CD4-positive, alpha-beta memory T cell (primary cell): ENCODE measurements at regions of chr2 and their contacts with region 1.

Region 1: DNA sequence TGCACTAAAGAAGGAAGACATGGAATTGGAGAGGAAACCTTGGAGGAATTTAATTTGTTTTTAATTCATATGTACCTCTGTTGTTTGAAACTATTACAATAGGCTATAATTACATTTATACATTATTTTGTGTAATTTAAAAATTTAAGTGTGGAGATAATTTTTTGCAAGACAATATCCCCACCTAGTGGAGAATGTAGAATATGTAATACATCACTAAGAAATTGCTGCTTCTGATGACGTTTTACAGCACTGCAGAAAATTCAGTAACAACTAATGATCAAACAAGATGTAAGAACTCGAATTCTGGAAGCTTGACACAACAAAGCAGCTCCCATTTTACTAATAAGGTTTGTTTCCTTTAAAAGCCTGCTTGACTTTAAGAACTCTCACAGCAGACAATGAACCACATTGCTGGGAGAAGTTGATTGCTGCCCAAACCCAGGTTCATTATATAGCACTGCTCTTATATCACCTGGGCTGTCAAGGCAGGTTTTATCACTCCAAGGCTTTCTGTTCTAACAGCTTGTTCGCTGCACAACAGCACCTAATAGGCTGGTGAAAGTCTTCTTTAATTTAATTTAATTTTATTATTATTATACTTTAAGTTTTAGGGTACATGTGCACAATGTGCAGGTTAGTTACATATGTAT is 53.4 kb downstream of the THADA start:
- DNase-seq: peak; percentile 9 to 62 (median 54)
- H3K4me3 ChIP-seq: no peak overlapping the region
- H3K4me3 Mint-ChIP-seq: no peak overlapping the region
- H3K27ac ChIP-seq: no peak overlapping the region
- H3K27ac Mint-ChIP-seq: no peak overlapping the region
- H3K4me1 ChIP-seq: peaks cover 9% of the 10 kb centered on the region
- H3K4me1 Mint-ChIP-seq: peaks cover 5 to 10% (median 9%) of the 10 kb centered on the region in 4 donors
- H3K27me3 ChIP-seq: no peaks in the 10 kb centered on the region
- H3K27me3 Mint-ChIP-seq: no peaks in the 10 kb centered on the region

Region 2: GRCh38 chr2:42828487-42829425 is 713.7 kb before region 1 on chr2:
- CTCF ChIA-PET with region 1: interaction called, 6 read pairs
- POLR2A ChIA-PET with region 1: no interaction called
- intact Hi-C with region 1: loop called (anchors 1 kb)
- DNase-seq: peak; percentile 59 to 68 (median 63)
- H3K4me3 ChIP-seq: no peak overlapping the region
- H3K4me3 Mint-ChIP-seq: peak overlapping the region in 5 of 8 donors; percentile 17 to 57 (median 31)
- H3K27ac ChIP-seq: no peak overlapping the region
- H3K27ac Mint-ChIP-seq: peak overlapping the region in 1 of 7 donors; percentile 58
- H3K4me1 ChIP-seq: peaks cover 13% of the 10 kb centered on the region
- H3K4me1 Mint-ChIP-seq: peaks cover 8 to 20% (median 17%) of the 10 kb centered on the region in 4 donors
- H3K27me3 ChIP-seq: no peaks in the 10 kb centered on the region
- H3K27me3 Mint-ChIP-seq: peaks cover 3 to 10% of the 10 kb centered on the region in 2 donors

Region 3: DNA sequence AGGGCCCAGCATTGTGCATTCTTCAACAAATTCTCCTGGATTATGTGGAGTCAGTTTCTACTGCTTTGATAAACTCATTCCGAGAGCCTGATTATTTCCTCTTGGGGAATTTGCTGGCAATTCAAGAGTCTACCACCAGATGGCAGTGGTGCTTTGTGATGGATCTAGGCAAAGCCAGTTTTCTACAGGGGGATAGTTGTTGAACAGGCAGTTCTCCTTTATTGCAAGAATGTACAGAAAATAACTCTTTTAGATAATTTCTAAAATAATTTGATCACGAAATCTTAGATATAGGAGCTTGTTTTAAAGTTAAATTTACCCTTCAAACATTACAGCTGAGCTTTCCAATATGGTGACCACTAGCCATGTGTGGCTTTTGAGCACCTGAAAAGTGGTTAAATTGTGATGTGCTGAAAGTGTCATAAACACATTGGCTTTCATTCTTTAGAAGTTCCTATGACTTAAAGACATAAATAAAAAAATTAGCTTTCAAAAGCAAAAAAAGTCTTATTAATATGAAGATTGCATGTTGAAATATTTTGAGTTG is 683.3 kb before region 1 on chr2:
- CTCF ChIA-PET with region 1: interaction called, 4 read pairs
- POLR2A ChIA-PET with region 1: no interaction called
- intact Hi-C with region 1: loop called (anchors 1 kb)
- DNase-seq: peak in 4 of 5 donors; percentile 26 to 55 (median 43)
- H3K4me3 ChIP-seq: no peak overlapping the region
- H3K4me3 Mint-ChIP-seq: no peak overlapping the region
- H3K27ac ChIP-seq: no peak overlapping the region
- H3K27ac Mint-ChIP-seq: no peak overlapping the region
- H3K4me1 ChIP-seq: no peaks in the 10 kb centered on the region
- H3K4me1 Mint-ChIP-seq: no peaks in the 10 kb centered on the region
- H3K27me3 ChIP-seq: no peaks in the 10 kb centered on the region
- H3K27me3 Mint-ChIP-seq: no peaks in the 10 kb centered on the region

Region 4: DNA sequence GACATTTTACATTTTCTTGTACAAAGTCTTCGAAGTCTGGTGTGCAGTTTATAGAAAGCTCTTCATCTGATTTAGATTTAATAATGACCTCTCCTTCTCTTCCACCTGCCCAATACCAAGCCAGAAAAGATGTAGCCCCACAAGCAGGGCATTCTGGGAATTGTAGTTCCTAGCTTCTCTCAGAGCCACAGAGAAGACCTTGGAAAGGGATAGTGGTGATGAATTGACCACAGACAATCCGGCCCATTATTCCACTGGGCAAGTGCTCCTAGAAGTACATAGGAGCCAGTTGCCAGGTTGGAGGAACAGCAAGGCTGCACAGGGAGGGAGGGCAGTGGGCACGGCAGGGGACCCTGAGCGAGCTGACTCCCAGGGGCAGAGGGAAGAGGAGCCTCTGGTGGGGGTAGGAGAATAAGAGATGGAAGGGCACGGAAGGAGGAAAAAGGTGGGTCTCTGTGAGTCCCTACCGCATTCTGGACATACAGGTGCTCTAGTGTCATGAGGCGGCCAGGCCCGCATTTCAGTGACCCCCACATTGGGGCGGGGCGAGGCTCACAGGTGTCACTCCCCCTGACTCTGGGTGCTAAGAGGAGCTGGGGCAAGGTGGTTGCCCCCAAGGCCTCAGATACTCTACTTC is 597.5 kb before region 1 on chr2:
- CTCF ChIA-PET with region 1: interaction called, 48 read pairs
- POLR2A ChIA-PET with region 1: no interaction called
- intact Hi-C with region 1: loop called (anchors 1 kb)
- DNase-seq: no peak
- H3K4me3 ChIP-seq: no peak overlapping the region
- H3K4me3 Mint-ChIP-seq: no peak overlapping the region
- H3K27ac ChIP-seq: no peak overlapping the region
- H3K27ac Mint-ChIP-seq: no peak overlapping the region
- H3K4me1 ChIP-seq: no peaks in the 10 kb centered on the region
- H3K4me1 Mint-ChIP-seq: peaks cover 0 to 2% (median under 1%) of the 10 kb centered on the region in 4 donors
- H3K27me3 ChIP-seq: no peaks in the 10 kb centered on the region
- H3K27me3 Mint-ChIP-seq: no peaks in the 10 kb centered on the region

Region 5: DNA sequence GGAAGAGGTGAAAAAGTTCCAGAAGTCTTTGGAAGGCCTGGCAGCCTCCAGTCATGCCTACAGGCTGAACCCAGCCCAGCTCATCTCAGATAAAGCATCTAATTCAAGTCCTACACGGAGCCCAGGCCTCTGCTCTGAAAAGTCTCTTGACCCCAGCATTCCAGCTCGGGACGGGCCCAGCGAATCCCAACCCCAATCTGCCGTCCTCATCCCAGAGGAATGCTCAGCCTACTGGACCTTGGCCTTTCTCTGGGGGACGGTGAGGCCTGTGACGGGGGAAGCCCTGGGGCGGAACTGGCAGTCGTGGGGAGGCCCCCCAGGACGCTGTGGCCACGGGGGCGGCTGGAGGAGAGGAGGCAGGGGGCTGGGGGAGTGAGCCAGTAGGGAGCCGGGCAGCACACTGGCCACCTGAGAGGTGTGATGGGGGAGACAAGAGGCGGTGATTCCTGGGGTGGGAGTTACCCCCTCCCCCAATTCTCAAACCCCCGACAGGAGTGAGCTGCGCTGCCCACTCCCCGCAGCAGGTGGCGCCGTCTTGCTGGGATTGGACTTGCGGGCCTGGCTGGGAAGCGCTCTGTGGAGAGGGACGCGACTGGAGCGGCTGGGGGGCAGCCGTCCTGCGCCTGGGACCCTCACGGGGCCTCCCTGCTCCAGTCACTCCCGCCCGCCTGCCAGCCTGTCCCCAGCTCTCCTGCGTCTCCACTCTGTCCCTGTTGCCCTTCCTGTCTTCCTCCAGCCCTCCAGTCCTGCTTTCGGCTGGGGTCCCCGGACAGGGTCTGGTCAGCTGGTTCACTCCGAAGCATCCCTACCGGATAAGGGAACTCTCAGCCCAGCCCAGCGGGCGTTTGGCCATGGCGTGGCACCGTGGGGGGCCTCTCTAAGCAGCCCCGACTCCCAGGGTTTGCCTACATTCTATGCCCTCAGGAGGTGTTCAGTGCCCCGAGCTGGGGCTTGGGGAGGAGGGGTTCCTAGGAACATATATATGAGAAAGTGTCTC is 567.4 kb before region 1 on chr2:
- CTCF ChIA-PET with region 1: interaction called, 14 read pairs
- POLR2A ChIA-PET with region 1: no interaction called
- intact Hi-C with region 1: loop called (anchors 1 kb)
- DNase-seq: peak in 4 of 5 donors; percentile 25 to 43 (median 29)
- H3K4me3 ChIP-seq: no peak overlapping the region
- H3K4me3 Mint-ChIP-seq: no peak overlapping the region
- H3K27ac ChIP-seq: no peak overlapping the region
- H3K27ac Mint-ChIP-seq: peak overlapping the region in 1 of 7 donors; percentile 50
- H3K4me1 ChIP-seq: no peaks in the 10 kb centered on the region
- H3K4me1 Mint-ChIP-seq: peaks cover 0 to 5% (median 3%) of the 10 kb centered on the region in 4 donors
- H3K27me3 ChIP-seq: no peaks in the 10 kb centered on the region
- H3K27me3 Mint-ChIP-seq: no peaks in the 10 kb centered on the region

Region 6: GRCh38 chr2:43685357-43685756 is 142.9 kb after region 1 on chr2:
- CTCF ChIA-PET with region 1: no interaction called
- POLR2A ChIA-PET with region 1: no interaction called
- intact Hi-C with region 1: no loop called
- DNase-seq: no peak
- H3K4me3 ChIP-seq: no peak overlapping the region
- H3K4me3 Mint-ChIP-seq: no peak overlapping the region
- H3K27ac ChIP-seq: no peak overlapping the region
- H3K27ac Mint-ChIP-seq: no peak overlapping the region
- H3K4me1 ChIP-seq: no peaks in the 10 kb centered on the region
- H3K4me1 Mint-ChIP-seq: no peaks in the 10 kb centered on the region
- H3K27me3 ChIP-seq: no peaks in the 10 kb centered on the region
- H3K27me3 Mint-ChIP-seq: peaks cover 4 to 15% of the 10 kb centered on the region in 2 donors